ENCODE measurements at regions of chr2 and their contacts with region 1.

Region 1: DNA sequence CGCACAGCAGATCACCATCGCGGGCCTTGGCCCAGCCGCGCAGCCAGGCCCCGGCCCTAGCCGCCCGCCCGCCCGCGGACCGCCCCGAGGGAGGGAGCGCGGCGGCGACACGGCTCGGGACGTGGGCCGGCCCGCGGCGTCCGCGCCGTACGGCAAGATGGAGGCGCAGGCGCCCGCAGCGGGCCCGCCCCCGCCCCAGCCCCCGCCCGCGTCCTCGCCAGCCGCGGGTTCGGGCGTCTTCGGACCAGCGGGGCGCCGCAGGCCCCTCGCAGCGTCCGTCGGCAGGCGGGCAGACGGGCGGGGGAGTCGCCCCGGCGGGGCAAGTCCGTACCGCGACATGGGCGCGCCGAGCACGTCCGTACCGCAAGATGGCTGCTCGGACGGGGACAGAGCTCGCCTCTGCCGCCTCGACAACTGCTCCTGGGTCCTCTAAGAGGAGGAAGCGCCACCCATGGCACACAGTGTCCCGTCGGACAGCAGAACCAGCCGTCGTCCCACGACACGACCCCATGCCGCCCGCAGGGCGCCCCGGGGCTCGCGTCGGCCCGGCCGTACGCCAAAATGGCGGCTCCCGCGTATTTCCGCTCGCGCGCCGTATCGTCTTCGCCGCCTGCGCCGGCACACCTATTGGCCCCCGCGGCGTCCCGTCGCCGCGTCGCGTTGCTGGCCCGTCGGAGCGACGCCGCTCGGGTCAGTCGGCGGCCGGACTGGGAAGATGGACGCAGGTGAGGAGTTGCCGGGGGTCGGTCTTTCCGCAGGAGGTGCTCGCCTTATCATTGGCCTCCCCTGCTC is at the starts of genes ATG4B and THAP4:
- DNase-seq: peak; percentile 77 to 78 (median 78)
- H3K4me3 ChIP-seq: peak within 1 kb of the TSS; percentile 67 to 96 (median 77)
- H3K4me3 Mint-ChIP-seq: peak within 1 kb of the TSS; percentile 84 to 90
- H3K27ac ChIP-seq: peak within 1 kb of the TSS; percentile 82 to 95
- H3K27ac Mint-ChIP-seq: peak within 1 kb of the TSS; percentile 75 to 97 (median 90)
- H3K4me1 ChIP-seq: peaks cover 23 to 31% of the 10 kb centered on the region in 2 donors
- H3K4me1 Mint-ChIP-seq: peaks cover 51% of the 10 kb centered on the region
- H3K27me3 ChIP-seq: no peaks in the 10 kb centered on the region
- H3K27me3 Mint-ChIP-seq: peaks cover 0 to 2% (median 0%) of the 10 kb centered on the region in 3 donors
- CTCF ChIP-seq: no peak
- polyA plus RNA-seq, gene ATG4B: 54.5 to 202 (median 58.9) TPM
- polyA plus RNA-seq, gene THAP4: 15.1 to 25.9 (median 16.3) TPM

Region 2: GRCh38 chr2:240021488-240022104 is 1615.6 kb before region 1 on chr2:
- intact Hi-C with region 1: loop called in 1 of 2 experiments (anchors 5 kb)
- DNase-seq: peak; percentile 51 to 65 (median 61)
- H3K4me3 ChIP-seq: no peak overlapping the region
- H3K4me3 Mint-ChIP-seq: no peak overlapping the region
- H3K27ac ChIP-seq: no peak overlapping the region
- H3K27ac Mint-ChIP-seq: peak overlapping the region in 1 of 7 donors; percentile 45
- H3K4me1 ChIP-seq: peaks cover 13 to 15% of the 10 kb centered on the region in 2 donors
- H3K4me1 Mint-ChIP-seq: peaks cover 16% of the 10 kb centered on the region
- H3K27me3 ChIP-seq: no peaks in the 10 kb centered on the region
- H3K27me3 Mint-ChIP-seq: peaks cover 0 to under 1% (median 0%) of the 10 kb centered on the region in 3 donors
- CTCF ChIP-seq: peak; percentile 84

Region 3: DNA sequence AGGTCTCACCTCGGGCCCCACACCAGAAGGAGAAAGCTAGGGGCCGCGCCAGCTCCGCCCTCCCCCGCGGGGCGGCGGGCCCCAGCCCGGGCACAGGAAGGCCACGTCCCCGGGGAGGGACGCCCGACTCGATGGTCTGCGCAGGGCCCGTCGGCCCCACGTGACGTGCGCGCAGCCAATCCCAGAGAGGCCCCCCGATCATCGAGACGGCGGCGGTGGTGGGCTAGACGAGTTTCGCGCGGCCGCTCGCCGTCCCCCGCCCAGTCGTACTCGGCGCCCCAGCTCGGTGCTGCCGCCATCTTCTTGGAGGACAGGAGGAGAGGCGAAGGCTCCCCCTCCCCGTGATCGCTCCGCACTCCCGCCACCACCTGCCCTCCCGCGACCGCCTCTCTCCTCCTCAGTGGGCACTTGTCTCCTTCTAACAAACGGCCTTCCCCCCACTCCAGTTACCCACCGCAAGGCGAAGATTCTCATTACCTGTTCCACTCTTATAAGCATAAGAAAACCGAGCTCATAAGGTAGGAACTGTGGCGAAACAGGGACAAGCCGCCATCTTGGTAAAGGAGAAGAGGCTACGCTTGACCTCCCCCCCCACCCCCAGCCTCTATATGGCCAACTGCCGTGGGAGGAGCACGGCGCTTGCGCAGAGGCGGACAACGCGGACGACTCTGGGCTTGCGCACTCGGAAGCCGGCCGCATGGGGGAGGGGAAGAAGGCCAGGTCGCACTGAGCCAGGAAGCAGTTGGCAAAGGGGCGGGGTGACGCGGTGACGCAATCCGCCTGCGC is 321.9 kb before region 1 on chr2 and contains the start of gene HDLBP:
- intact Hi-C with region 1: loop called in 1 of 2 experiments (anchors 2 kb)
- DNase-seq: peak; percentile 99 to 100 (median 100)
- H3K4me3 ChIP-seq: peak within 1 kb of the TSS; percentile 88 to 96 (median 88)
- H3K4me3 Mint-ChIP-seq: peak within 1 kb of the TSS; percentile 96 to 99
- H3K27ac ChIP-seq: peak within 1 kb of the TSS; percentile 98 to 99
- H3K27ac Mint-ChIP-seq: peak within 1 kb of the TSS; percentile 100
- H3K4me1 ChIP-seq: peaks cover 37 to 51% of the 10 kb centered on the region in 2 donors
- H3K4me1 Mint-ChIP-seq: peaks cover 72% of the 10 kb centered on the region
- H3K27me3 ChIP-seq: no peaks in the 10 kb centered on the region
- H3K27me3 Mint-ChIP-seq: peaks cover 0 to 5% (median 4%) of the 10 kb centered on the region in 3 donors
- CTCF ChIP-seq: no peak
- polyA plus RNA-seq, gene HDLBP: 50.4 to 73.1 (median 69.9) TPM

Region 4: DNA sequence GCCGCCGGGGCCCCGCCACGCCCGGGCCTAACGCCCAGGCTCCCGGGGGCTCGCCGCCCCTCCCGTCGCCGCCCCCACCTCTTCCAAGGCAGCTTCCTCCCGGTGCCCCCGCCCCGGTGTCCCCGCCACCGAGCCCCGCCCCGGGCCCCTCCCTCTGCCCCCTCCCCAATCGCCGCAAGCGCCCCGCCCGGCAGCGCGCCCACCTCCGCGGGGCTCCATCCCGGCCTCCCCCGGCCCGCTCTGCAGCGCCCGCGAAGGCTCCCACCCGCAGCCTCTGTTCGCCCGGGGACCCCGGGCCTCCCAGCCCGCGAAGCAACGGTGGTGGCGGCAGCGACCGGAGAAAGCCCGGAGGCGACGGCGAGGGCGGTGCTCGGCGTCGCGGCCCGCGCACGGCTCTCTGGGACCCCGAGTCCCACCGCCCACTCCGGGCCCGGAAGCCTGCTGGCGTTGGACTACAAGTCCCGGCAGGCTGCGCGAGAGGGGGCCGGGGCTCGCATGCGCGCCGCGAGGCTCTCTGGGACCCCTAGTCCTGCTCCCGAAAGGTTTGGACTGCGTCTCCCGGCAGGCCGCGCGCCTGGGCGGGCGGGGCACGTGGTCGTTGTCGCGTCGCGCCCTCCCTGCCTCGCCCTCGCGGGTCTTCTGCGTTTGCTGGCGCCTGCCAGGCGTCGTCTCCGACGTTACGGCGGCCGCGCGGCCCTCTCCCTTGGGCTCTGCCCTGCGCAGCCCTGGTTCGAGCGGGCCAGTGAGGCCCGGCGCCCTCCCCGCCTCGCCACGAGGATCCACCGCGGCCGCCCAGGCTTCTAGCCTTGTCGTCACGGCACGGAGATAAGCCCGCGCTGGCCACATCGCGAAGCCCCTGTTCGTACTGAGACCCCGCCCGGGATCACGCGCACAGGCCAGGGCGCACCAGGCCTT is 128.7 kb before region 1 on chr2 and contains the start of gene STK25:
- intact Hi-C with region 1: loop called in 1 of 2 experiments (anchors 5 kb)
- DNase-seq: peak; percentile 89 to 94 (median 94)
- H3K4me3 ChIP-seq: peak within 1 kb of the TSS; percentile 51 to 87 (median 81)
- H3K4me3 Mint-ChIP-seq: peak within 1 kb of the TSS; percentile 81 to 89
- H3K27ac ChIP-seq: peak within 1 kb of the TSS in 1 of 2 donors; percentile 65
- H3K27ac Mint-ChIP-seq: peak within 1 kb of the TSS in 3 of 7 donors; percentile 40 to 86 (median 41)
- H3K4me1 ChIP-seq: peaks cover 17 to 19% of the 10 kb centered on the region in 2 donors
- H3K4me1 Mint-ChIP-seq: peaks cover 23% of the 10 kb centered on the region
- H3K27me3 ChIP-seq: peaks cover 0 to 20% of the 10 kb centered on the region in 2 donors
- H3K27me3 Mint-ChIP-seq: peaks cover 26 to 35% (median 27%) of the 10 kb centered on the region in 3 donors
- CTCF ChIP-seq: peak; percentile 48
- polyA plus RNA-seq, gene STK25: 62.7 to 215 (median 69.5) TPM

Region 5: GRCh38 chr2:241686649-241687425 is 49.6 kb after region 1 on chr2 and contains the start of gene DTYMK:
- intact Hi-C with region 1: loop called (anchors 2 to 5 kb)
- DNase-seq: peak; percentile 92 to 97 (median 96)
- H3K4me3 ChIP-seq: peak within 1 kb of the TSS; percentile 87 to 92 (median 89)
- H3K4me3 Mint-ChIP-seq: peak within 1 kb of the TSS; percentile 89 to 94
- H3K27ac ChIP-seq: peak within 1 kb of the TSS; percentile 50 to 89
- H3K27ac Mint-ChIP-seq: peak within 1 kb of the TSS; percentile 80 to 96 (median 89)
- H3K4me1 ChIP-seq: peaks cover 20 to 24% of the 10 kb centered on the region in 2 donors
- H3K4me1 Mint-ChIP-seq: peaks cover 25% of the 10 kb centered on the region
- H3K27me3 ChIP-seq: no peaks in the 10 kb centered on the region
- H3K27me3 Mint-ChIP-seq: peaks cover 0 to 1% (median 0%) of the 10 kb centered on the region in 3 donors
- CTCF ChIP-seq: no peak
- polyA plus RNA-seq, gene DTYMK: 13.0 to 23.5 (median 18.7) TPM

Region 6: GRCh38 chr2:241702132-241703031 is 65.2 kb after region 1 on chr2:
- intact Hi-C with region 1: loop called in 1 of 2 experiments (anchors 5 kb)
- DNase-seq: peak; percentile 51 to 73 (median 62)
- H3K4me3 ChIP-seq: peak overlapping the region; percentile 38 to 86 (median 65)
- H3K4me3 Mint-ChIP-seq: peak overlapping the region; percentile 78 to 80
- H3K27ac ChIP-seq: peak overlapping the region; percentile 68 to 79
- H3K27ac Mint-ChIP-seq: peak overlapping the region in 4 of 7 donors; percentile 27 to 41 (median 34)
- H3K4me1 ChIP-seq: peaks cover 15 to 22% of the 10 kb centered on the region in 2 donors
- H3K4me1 Mint-ChIP-seq: peaks cover 16% of the 10 kb centered on the region
- H3K27me3 ChIP-seq: no peaks in the 10 kb centered on the region
- H3K27me3 Mint-ChIP-seq: peaks cover 0 to 8% (median 0%) of the 10 kb centered on the region in 3 donors
- CTCF ChIP-seq: no peak

Measured in CD14-positive monocyte (primary cell).